Heart right ventricle (tissue), 16 donors: ENCODE measurements at regions of chr18 and their contacts with region 1.

Region 1: GRCh38 chr18:34048423-34048822 is 176.3 kb downstream of the NOL4 start:
- DNase-seq: no peak
- ATAC-seq: no peak
- H3K4me3 ChIP-seq: no peak overlapping the region
- H3K27ac ChIP-seq: no peak overlapping the region
- H3K4me1 ChIP-seq: no peaks in the 10 kb centered on the region
- H3K27me3 ChIP-seq: no peaks in the 10 kb centered on the region
- CTCF ChIP-seq: no peak

Region 2: DNA sequence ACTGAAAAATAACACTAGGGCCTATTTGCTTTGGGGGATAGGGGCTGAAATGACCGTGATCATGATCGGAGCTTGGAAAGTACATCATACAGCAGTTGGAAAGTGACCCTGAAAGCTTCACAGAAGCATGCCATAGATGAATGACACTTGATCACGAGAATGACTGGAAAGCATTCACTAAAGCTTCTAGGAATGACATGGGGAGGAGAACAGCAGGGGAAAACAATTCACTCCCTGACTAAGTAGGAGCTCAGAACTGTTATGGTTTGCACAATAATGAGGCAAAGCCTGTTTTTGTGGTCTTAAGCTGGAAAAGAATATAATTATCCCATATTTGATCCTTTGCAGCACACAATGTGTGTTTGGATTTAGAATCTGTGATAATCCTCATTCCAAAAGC is 61.2 kb before region 1 on chr18:
- intact Hi-C with region 1: loop called in 1 of 10 experiments (anchors 10 kb)
- DNase-seq: no peak
- ATAC-seq: no peak
- H3K4me3 ChIP-seq: no peak overlapping the region
- H3K27ac ChIP-seq: no peak overlapping the region
- H3K4me1 ChIP-seq: no peaks in the 10 kb centered on the region
- H3K27me3 ChIP-seq: no peaks in the 10 kb centered on the region
- CTCF ChIP-seq: no peak